ENCODE measurements at regions of chr4 and their contacts with region 1.

Region 1: GRCh38 chr4:39697740-39698423 is at the start of gene UBE2K:
- DNase-seq: peak; percentile 89 to 95
- ATAC-seq: peak; percentile 78 to 93 (median 88)
- H3K4me3 ChIP-seq: peak within 1 kb of the TSS; percentile 100
- H3K4me3 Mint-ChIP-seq: peak within 1 kb of the TSS; percentile 98
- H3K27ac ChIP-seq: peak within 1 kb of the TSS; percentile 91
- H3K27ac Mint-ChIP-seq: peak within 1 kb of the TSS; percentile 91 to 99
- H3K4me1 ChIP-seq: peaks cover 17% of the 10 kb centered on the region
- H3K4me1 Mint-ChIP-seq: peaks cover 36 to 45% of the 10 kb centered on the region in 2 donors
- H3K27me3 ChIP-seq: no peaks in the 10 kb centered on the region
- H3K27me3 Mint-ChIP-seq: no peaks in the 10 kb centered on the region
- CTCF ChIP-seq: no peak
- total RNA-seq, gene UBE2K: 38.0 to 53.9 (median 43.6) TPM

Region 2: GRCh38 chr4:39527273-39528060 is 170.4 kb before region 1 on chr4 and contains the start of gene UGDH:
- intact Hi-C with region 1: loop called (anchors 5 kb)
- DNase-seq: peak; percentile 91 to 95
- ATAC-seq: peak; percentile 98 to 100 (median 99)
- H3K4me3 ChIP-seq: peak within 1 kb of the TSS; percentile 93
- H3K4me3 Mint-ChIP-seq: peak within 1 kb of the TSS; percentile 96
- H3K27ac ChIP-seq: peak within 1 kb of the TSS; percentile 68
- H3K27ac Mint-ChIP-seq: peak within 1 kb of the TSS; percentile 78 to 92
- H3K4me1 ChIP-seq: peaks cover 18% of the 10 kb centered on the region
- H3K4me1 Mint-ChIP-seq: peaks cover 13 to 20% of the 10 kb centered on the region in 2 donors
- H3K27me3 ChIP-seq: no peaks in the 10 kb centered on the region
- H3K27me3 Mint-ChIP-seq: no peaks in the 10 kb centered on the region
- CTCF ChIP-seq: no peak
- total RNA-seq, gene UGDH: 12.2 to 14.8 (median 13.6) TPM

Region 3: DNA sequence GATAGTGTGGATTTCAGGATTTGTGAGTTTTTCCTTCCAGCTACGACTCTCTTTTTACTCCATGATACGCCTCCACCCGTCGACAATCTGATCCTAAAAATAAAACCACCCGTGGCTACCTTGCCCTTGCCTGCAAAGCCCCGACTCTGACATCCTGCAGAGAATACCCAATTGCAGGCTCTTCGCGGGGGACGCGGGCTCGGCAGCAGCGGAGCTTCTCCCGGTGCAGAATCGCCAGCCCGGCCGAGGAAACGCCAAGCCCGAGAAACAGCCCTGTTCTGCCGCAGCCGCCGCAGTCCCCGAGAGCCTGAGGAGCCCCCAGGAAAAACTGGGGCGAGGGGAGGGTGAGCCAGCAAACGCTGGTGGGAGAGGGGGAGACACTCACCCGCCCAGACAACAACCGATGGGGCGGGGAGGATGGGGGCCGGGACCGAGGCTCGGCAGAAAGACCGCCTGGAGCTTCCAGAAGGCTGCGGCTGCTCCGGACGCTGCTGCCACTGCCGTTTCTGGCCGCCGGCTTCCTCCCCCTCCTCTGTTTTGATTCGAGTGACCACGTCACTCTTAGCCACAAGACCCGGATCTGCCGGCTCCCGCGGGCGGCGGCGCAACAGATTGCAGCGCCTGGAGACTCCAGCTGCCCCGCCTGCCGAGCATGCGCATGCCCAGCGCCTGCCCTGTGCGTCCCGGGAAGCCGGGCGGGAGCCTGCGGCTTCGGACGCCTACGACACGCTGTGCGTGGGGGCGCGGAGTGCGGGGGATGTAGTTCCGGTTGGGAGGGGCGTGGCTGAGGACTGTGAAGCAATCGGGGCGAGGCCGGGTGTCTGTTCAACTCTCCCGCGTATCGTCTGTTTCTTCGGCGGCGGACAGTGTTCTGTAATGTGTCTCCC is 59.3 kb before region 1 on chr4 and contains the start of gene SMIM14:
- intact Hi-C with region 1: loop called (anchors 5 kb)
- DNase-seq: peak; percentile 80 to 93
- ATAC-seq: peak; percentile 76 to 90 (median 80)
- H3K4me3 ChIP-seq: peak within 1 kb of the TSS; percentile 76
- H3K4me3 Mint-ChIP-seq: peak within 1 kb of the TSS; percentile 94
- H3K27ac ChIP-seq: peak within 1 kb of the TSS; percentile 90
- H3K27ac Mint-ChIP-seq: peak within 1 kb of the TSS; percentile 94
- H3K4me1 ChIP-seq: peaks cover 21% of the 10 kb centered on the region
- H3K4me1 Mint-ChIP-seq: peaks cover 39 to 48% of the 10 kb centered on the region in 2 donors
- H3K27me3 ChIP-seq: no peaks in the 10 kb centered on the region
- H3K27me3 Mint-ChIP-seq: no peaks in the 10 kb centered on the region
- CTCF ChIP-seq: no peak
- total RNA-seq, gene SMIM14: 12.6 to 21.8 (median 15.2) TPM

Region 4: DNA sequence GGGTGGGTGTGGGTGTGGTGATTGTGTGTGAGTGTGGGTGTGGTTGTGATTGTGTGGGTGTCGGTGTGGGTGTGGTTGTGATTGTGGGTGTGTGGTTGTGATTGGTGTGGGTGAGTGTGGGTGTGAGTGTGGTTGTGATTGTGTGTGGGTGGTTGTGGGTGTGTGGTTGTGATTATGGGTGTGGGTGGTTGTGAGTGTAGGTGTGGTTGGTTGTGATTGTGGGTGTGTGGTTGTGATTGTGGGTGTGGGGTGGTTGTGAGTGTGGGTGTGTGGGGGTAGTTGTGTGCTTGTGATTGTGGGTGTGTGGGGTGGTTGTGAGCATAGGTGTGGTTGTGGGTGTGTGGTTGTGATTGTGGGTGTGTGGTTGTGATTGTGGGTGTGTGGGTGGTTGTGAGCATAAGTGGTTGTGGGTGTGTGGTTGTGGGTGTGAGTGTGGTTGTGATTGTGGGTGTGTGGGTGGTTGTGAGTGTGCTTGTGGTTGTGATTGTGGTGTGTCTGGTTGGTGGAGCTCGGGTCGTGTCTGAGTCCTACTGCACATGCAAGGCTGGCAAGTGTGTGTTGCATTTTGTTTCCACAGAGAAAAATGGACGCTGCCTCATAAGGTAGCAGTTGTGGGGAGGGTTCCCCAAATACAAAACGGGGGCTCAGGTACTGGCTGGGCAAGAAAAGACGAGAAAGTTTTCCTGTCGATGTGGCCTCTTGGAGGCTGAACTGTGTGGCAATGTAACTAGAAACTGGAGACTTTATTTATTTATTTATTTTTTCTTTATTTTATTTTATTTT is 116.7 kb after region 1 on chr4:
- intact Hi-C with region 1: loop called (anchors 10 kb)
- DNase-seq: peak; percentile 30 to 49
- ATAC-seq: peak; percentile 38 to 52 (median 47)
- H3K4me3 ChIP-seq: no peak overlapping the region
- H3K4me3 Mint-ChIP-seq: peak overlapping the region; percentile 79
- H3K27ac ChIP-seq: peak overlapping the region; percentile 19
- H3K27ac Mint-ChIP-seq: peak overlapping the region; percentile 80 to 93
- H3K4me1 ChIP-seq: no peaks in the 10 kb centered on the region
- H3K4me1 Mint-ChIP-seq: peaks cover 9 to 27% of the 10 kb centered on the region in 2 donors
- H3K27me3 ChIP-seq: no peaks in the 10 kb centered on the region
- H3K27me3 Mint-ChIP-seq: peaks cover 0 to 3% of the 10 kb centered on the region in 2 donors
- CTCF ChIP-seq: no peak

Region 5: GRCh38 chr4:40056716-40057585 is 359.1 kb after region 1 on chr4 and contains the start of gene N4BP2:
- intact Hi-C with region 1: loop called (anchors 5 kb)
- DNase-seq: peak; percentile 63 to 89
- ATAC-seq: peak; percentile 65 to 81 (median 76)
- H3K4me3 ChIP-seq: peak within 1 kb of the TSS; percentile 65
- H3K4me3 Mint-ChIP-seq: peak within 1 kb of the TSS; percentile 95
- H3K27ac ChIP-seq: peak within 1 kb of the TSS; percentile 91
- H3K27ac Mint-ChIP-seq: peak within 1 kb of the TSS; percentile 91 to 95
- H3K4me1 ChIP-seq: peaks cover 18% of the 10 kb centered on the region
- H3K4me1 Mint-ChIP-seq: peaks cover 26 to 39% of the 10 kb centered on the region in 2 donors
- H3K27me3 ChIP-seq: no peaks in the 10 kb centered on the region
- H3K27me3 Mint-ChIP-seq: no peaks in the 10 kb centered on the region
- CTCF ChIP-seq: peak; percentile 74
- total RNA-seq, gene N4BP2: 16.4 to 22.4 (median 17.5) TPM